ENCODE measurements at regions of chr6 and their contacts with region 1.

Region 1: GRCh38 chr6:7238900-7239589 is 74.0 kb downstream of the SSR1 start:
- DNase-seq: peak; percentile 53 to 84
- H3K4me3 ChIP-seq: no peak overlapping the region
- H3K27ac ChIP-seq: no peak overlapping the region
- H3K4me1 ChIP-seq: peaks cover 57% of the 10 kb centered on the region
- H3K27me3 ChIP-seq: no peaks in the 10 kb centered on the region
- CTCF ChIP-seq: peak; percentile 67

Region 2: GRCh38 chr6:6712258-6712999 is 526.6 kb before region 1 on chr6:
- CTCF ChIA-PET with region 1: no interaction called
- POLR2A ChIA-PET with region 1: no interaction called
- intact Hi-C with region 1: loop called (anchors 1 kb)
- DNase-seq: peak; percentile 79 to 96
- H3K4me3 ChIP-seq: peak overlapping the region; percentile 23; the same call in 1 of the 2 replicates
- H3K27ac ChIP-seq: peak overlapping the region; percentile 83
- H3K4me1 ChIP-seq: peaks cover 21% of the 10 kb centered on the region
- H3K27me3 ChIP-seq: no peaks in the 10 kb centered on the region
- CTCF ChIP-seq: no peak; the same call in 1 of the 2 replicates

Region 3: DNA sequence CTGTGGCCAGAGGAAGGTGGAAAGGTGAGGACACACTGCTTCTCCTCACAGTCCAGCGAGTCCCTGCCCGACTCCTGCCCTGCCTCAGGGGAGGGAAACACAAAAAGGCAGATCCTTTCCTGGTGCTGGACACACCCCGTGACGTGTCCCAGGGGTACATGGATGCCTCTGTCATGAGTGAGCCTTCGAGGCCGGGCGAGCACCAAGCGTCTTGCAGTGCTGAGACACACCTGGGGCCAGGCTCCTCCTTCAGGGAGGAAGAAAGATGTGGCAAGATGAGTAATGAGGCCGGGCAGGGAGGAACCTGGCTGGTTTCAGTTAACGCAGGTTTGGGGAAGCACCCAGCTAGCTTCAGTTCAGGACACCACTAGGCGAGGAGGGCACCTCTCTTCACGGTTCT is 435.5 kb before region 1 on chr6:
- CTCF ChIA-PET with region 1: no interaction called
- POLR2A ChIA-PET with region 1: interaction called, 5 read pairs
- intact Hi-C with region 1: loop called (anchors 5 kb)
- DNase-seq: peak; percentile 94 to 97
- H3K4me3 ChIP-seq: no peak overlapping the region
- H3K27ac ChIP-seq: peak overlapping the region; percentile 98
- H3K4me1 ChIP-seq: peaks cover 29% of the 10 kb centered on the region
- H3K27me3 ChIP-seq: no peaks in the 10 kb centered on the region
- CTCF ChIP-seq: no peak

Region 4: DNA sequence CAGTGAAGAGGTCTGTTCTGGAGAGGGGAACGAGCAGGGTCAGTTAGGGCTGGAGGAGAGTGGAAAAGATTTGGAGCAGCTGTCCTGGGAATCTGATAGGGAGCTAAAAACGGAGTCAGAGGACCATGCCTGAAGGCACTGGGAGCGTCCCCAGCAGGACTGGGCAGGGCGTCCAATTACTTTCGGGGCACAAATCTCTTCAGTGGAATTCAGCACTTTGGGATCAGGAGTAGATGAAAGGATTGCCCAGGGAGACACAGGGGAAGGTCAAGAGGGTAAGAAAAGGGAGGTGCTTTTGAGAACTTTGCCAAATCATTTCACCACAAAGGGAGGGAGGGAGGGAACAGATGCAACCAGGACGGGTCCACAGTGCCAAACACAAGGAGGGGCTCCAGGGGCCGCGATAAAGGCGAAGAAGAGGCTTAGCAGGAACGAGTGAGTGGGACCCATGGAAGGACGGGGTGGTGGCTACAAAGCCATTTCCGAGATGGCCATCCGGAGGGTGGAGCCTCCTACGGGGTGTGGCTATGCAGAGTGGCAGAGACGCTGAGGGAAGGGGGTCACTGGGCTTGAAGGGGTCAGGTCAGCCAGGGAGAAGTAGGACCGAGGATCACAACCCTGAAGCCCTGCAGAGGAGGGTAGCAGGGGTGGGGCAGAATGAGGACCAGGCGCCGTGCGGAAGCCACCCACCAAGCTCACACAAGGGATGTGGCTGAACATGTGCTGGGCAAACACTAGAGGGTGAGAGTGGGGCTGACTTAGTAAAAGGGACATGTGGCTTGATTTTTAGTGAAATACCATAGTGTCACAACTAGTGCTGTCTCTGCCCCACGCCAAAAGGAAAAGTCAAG is 311.3 kb before region 1 on chr6:
- CTCF ChIA-PET with region 1: no interaction called
- POLR2A ChIA-PET with region 1: no interaction called
- intact Hi-C with region 1: loop called (anchors 2 kb)
- DNase-seq: peak in 1 of 2 experiments; percentile 28
- H3K4me3 ChIP-seq: no peak overlapping the region
- H3K27ac ChIP-seq: no peak overlapping the region
- H3K4me1 ChIP-seq: peaks cover 6% of the 10 kb centered on the region
- H3K27me3 ChIP-seq: no peaks in the 10 kb centered on the region
- CTCF ChIP-seq: no peak

Region 5: DNA sequence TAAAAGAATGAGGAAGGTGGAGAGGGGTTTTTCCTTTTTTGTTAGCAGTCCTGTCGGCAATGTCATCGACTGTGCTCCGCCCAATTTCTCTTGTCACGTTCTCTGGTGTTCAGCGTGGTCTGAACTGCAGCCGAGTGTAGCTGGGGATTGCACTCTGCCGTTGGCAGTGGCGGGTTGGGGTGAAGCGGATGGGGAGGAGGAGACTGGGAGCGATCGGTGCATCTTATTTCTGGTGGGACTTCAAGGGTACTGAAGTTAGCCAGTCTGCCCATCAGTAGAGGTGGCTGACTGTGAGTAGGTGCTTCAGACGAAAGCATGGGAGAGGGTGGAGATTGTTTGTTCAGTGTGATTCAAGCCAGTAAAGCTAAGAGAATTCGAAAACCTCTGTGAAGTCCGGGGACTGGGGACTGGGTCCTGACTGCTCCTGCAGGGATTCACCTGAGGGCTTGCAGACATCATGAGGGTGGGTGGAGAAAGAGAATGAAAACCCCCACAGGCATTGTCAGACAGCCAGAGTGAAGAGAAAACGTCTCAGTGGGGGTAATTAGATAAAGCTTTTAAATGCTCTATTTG is 126.2 kb before region 1 on chr6:
- CTCF ChIA-PET with region 1: no interaction called
- POLR2A ChIA-PET with region 1: no interaction called
- intact Hi-C with region 1: loop called (anchors 2 kb)
- DNase-seq: peak; percentile 38 to 72
- H3K4me3 ChIP-seq: peak overlapping the region; percentile 53; the same call in 1 of the 2 replicates
- H3K27ac ChIP-seq: peak overlapping the region; percentile 67
- H3K4me1 ChIP-seq: peaks cover 41% of the 10 kb centered on the region
- H3K27me3 ChIP-seq: no peaks in the 10 kb centered on the region
- CTCF ChIP-seq: no peak

Region 6: DNA sequence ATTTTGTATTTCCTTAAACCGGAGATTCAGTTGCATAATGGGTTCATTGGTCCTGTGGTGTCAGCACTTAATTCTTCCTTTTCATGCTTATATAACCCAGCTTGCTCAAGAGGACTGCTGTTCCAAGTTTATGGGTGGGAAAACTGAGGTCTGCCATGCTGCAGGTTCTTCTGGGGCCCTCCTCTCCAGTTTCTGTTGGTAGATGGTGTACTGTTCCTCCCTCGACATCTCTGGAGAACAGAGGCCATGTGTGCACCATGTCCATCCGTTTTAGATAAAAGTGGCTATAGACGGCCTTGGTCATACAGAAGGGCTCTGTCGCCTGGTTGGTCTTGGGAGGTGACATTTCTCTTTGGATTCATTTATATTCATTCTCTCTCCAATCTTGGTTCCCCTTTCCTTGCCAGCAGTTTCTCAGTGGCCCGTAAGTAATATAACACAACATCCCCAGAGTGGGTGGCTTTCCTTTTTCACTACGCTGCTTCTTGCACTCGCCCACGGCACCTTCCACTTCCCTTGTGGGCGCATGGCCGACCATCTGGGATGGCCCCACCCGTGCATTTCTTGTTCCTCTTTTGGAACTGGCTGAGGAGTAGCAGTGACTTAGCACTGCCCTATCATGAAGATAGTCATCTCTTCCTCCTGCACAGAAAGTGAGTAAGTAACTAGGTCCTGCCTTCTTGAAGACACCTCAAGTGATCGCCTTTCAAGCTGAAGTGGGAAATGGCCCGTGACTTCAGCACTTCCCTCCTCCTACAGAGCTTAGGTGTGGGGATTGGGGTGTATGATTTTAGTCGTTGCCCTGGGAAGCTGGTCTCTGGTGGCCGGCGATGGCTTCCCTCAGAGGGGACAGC is 37.1 kb before region 1 on chr6:
- CTCF ChIA-PET with region 1: no interaction called
- POLR2A ChIA-PET with region 1: interaction called, 7 read pairs
- intact Hi-C with region 1: loop called (anchors 5 kb)
- DNase-seq: no peak
- H3K4me3 ChIP-seq: no peak overlapping the region; the same call in 1 of the 2 replicates
- H3K27ac ChIP-seq: peak overlapping the region; percentile 92
- H3K4me1 ChIP-seq: peaks cover 36% of the 10 kb centered on the region
- H3K27me3 ChIP-seq: no peaks in the 10 kb centered on the region
- CTCF ChIP-seq: no peak

Measured in PC-9 (cell line).